H1 (cell line): ENCODE measurements at regions of chr1 and their contacts with region 1.

Region 1: DNA sequence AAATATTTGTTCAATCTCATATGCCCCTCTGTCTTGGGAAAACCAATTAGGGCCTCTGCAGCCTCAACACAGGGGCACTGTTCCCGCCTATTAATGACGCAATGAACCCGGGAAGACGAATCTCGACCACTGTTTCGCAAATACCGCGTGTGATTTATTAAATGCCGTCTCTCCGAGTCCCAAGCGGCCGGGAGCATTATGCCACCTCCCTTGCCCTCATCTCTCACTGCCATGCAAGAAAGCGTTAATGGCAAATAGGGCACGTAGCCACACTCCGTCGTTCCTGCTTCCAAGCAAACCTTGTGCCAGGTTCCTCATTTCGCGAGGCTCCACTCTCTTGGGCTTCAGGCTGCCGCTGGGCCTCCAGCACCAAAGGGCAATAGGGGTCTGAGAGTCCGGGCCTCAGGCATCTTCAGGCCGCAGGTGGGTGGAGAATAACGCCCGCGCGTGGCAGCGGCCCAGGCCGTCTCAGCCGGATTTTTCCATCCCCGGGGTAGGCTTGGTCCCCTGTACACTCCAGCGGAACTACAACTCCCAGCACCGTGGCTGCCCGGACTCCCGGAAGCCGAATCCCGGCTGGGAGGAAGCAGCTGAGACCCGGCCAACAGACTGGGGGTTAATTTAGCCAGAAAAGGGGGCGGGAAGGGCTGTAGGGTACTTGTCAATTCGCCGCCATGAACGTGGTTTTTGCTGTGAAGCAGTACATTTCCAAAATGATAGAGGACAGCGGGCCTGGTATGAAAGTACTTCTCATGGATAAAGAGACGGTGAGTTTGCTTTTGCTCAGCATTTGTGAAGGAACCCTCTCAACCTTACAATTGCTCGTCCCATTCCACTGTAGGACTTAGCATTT is at the start of gene VPS45:
- DNase-seq: peak; percentile 67 to 90
- H3K4me3 ChIP-seq: peak within 1 kb of the TSS; percentile 81 to 95 (median 91)
- H3K27ac ChIP-seq: peak within 1 kb of the TSS; percentile 93
- H3K4me1 ChIP-seq: no peaks in the 10 kb centered on the region
- H3K27me3 ChIP-seq: no peaks in the 10 kb centered on the region
- CTCF ChIP-seq: no peak
- EP300 ChIP-seq: no peak
- POLR2A ChIP-seq: no peak; a peak in 2 of 3 replicates
- RAD21 ChIP-seq: no peak
- total RNA-seq, gene VPS45: 27.6 and 29.9 TPM in 2 replicates

Region 2: DNA sequence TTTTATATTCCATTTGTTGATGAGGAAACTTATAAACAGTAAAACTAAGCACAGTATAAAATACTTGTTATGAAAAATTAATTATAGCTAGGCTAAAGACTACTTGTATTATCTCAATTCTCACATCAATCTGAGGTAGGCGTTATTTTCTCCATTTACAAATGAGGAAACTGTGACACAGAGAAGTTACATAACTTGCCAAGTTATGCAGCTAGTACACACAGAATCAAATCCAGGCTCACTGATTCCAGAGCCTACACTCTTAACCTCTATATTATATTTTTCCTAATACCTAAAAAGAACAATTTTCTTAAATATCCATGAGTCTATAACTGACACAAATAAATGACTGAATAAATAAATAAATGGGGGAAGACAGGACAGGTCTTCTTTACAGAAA is 11.0 kb before region 1 on chr1:
- CTCF ChIA-PET with region 1: interaction called, 4 read pairs
- POLR2A ChIA-PET with region 1: interaction called, 10 read pairs
- DNase-seq: no peak
- H3K4me3 ChIP-seq: no peak overlapping the region
- H3K27ac ChIP-seq: no peak overlapping the region
- H3K4me1 ChIP-seq: no peaks in the 10 kb centered on the region
- H3K27me3 ChIP-seq: no peaks in the 10 kb centered on the region
- CTCF ChIP-seq: no peak
- EP300 ChIP-seq: no peak
- POLR2A ChIP-seq: no peak
- RAD21 ChIP-seq: no peak